ENCODE measurements at regions of chr2 and their contacts with region 1.

Region 1: DNA sequence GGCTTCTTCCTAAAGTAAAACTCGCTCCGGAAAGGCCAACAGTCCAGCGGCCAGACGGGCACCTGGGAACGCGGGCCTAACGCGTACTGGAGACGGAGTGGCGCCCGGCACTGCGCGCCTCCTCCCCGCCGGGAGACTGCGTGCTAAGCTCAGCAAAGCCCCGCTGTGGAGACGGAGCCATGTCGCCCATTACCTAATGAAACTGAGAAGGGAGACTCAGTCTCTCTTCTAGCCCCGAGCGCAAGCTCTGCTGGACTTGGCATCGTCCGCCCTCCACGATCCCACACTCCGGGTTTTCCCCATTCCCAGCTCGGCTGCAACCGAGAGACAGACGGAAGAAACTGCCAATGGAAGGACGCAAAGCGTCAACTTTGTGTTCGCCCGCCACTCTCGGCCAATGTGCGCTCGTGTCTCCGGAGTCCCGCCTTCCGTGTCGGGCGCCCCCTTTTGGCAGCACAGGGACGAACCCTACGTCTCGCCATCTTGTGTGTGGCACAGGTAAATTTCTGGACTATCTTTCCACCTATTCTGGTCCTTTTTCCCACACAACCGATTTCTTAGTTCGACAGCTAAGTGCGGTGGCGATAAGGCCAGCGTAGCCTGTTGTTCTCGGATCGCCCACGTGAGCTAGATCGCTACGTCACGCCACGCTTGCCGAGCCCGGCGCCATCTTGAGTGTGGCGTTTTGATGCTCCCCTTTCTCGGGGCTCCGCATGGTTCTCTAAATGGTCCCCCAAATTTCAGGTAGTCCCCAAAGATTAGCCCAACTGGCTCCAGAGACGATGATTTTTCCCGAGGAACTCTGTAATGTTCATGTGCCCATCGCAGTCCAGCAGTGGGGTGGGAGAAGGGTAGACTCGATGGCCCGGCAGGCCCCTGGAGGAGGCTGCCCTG is 1.3 kb upstream of the PTMA start:
- DNase-seq: peak; percentile 98 to 99 (median 99)
- ATAC-seq: peak; percentile 72 to 74
- H3K4me3 ChIP-seq: peak overlapping the region; percentile 81
- H3K27ac ChIP-seq: peak overlapping the region; percentile 99
- H3K4me1 ChIP-seq: peaks cover 8% of the 10 kb centered on the region
- H3K27me3 ChIP-seq: no peaks in the 10 kb centered on the region

Region 2: DNA sequence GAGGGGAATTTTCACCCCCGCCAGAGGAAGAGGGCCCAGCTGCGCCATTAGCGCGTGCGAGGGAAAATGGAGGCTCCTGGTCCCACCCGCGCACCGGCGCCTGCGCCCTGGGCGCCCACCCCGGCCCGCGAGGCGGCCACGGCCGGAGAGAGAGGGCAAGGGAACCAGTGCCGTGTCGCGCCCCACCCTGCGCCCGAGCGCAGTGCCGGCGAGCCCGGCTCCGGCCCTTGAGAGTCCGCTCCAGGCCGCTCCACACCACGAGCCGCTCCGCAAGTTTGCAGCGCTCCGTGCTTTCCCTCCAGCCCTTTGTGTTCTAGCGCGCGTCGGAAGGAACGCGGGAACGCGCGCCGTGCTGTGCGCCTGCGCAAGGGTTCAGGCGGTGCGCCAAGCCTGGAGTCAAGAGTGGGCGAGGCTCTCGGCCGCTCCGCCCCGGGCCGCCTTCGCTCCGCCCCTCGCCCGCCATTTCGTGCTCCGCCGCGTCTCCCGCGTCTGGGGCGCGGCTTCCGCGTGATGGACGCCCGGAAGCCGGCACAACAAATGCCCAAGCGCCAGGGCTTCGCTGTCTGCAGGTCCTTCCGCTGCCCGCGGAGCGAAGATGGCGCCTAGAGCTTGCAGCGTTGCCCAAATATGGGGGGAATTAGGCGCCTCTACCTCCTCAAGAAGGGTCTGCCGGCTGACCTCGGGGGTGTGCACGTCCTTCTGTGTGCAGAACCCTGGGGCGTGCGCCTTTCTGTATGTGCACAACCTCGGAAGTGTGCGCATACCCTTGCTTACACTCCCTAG is 44.8 kb before region 1 on chr2:
- intact Hi-C with region 1: loop called in 1 of 4 experiments (anchors 2 kb)
- DNase-seq: peak; percentile 96 to 99 (median 98)
- ATAC-seq: peak; percentile 82
- H3K4me3 ChIP-seq: peak overlapping the region; percentile 26
- H3K27ac ChIP-seq: peak overlapping the region; percentile 77
- H3K4me1 ChIP-seq: peaks cover 5% of the 10 kb centered on the region
- H3K27me3 ChIP-seq: no peaks in the 10 kb centered on the region

Region 3: GRCh38 chr2:231877533-231878456 is 170.8 kb after region 1 on chr2:
- intact Hi-C with region 1: no loop called
- DNase-seq: no peak
- ATAC-seq: no peak
- H3K4me3 ChIP-seq: no peak overlapping the region
- H3K27ac ChIP-seq: no peak overlapping the region
- H3K4me1 ChIP-seq: no peaks in the 10 kb centered on the region
- H3K27me3 ChIP-seq: peaks cover 2% of the 10 kb centered on the region